ENCODE measurements at regions of chr5 and their contacts with region 1.

Region 1: DNA sequence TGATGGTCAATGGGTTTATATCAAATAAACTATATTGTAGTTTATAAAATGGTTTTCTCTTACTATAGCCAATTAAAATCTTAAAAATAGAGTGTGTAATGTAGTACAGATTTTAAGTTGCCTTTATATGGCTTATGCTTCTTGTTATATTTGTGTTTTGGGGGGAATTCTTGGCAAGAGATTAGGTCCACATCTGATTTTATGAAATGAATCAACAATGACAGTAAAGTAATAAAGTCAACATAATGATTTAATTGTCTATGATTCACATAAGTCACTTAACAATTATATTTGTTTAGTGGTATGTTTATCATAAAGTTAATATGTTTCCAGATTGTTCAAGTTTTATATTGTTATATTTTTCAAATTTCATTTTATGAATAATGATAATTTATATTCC is 164.8 kb downstream of the COMMD10 start:
- DNase-seq: no peak
- ATAC-seq: no peak
- H3K4me3 Mint-ChIP-seq: no peak overlapping the region
- H3K27ac Mint-ChIP-seq: no peak overlapping the region
- H3K4me1 Mint-ChIP-seq: no peaks in the 10 kb centered on the region
- H3K27me3 Mint-ChIP-seq: no peaks in the 10 kb centered on the region

Region 2: GRCh38 chr5:116068028-116068632 is 181.5 kb before region 1 on chr5:
- CTCF ChIA-PET with region 1: no interaction called
- POLR2A ChIA-PET with region 1: no interaction called
- intact Hi-C with region 1: no loop called
- DNase-seq: no peak
- ATAC-seq: peak; percentile 44
- H3K4me3 Mint-ChIP-seq: no peak overlapping the region
- H3K27ac Mint-ChIP-seq: no peak overlapping the region
- H3K4me1 Mint-ChIP-seq: no peaks in the 10 kb centered on the region
- H3K27me3 Mint-ChIP-seq: peaks cover 25% of the 10 kb centered on the region

Region 3: GRCh38 chr5:116289276-116289675 is 39.6 kb after region 1 on chr5:
- CTCF ChIA-PET with region 1: no interaction called
- POLR2A ChIA-PET with region 1: no interaction called
- intact Hi-C with region 1: loop called (anchors 1 to 5 kb)
- DNase-seq: no peak
- ATAC-seq: no peak
- H3K4me3 Mint-ChIP-seq: no peak overlapping the region
- H3K27ac Mint-ChIP-seq: no peak overlapping the region
- H3K4me1 Mint-ChIP-seq: no peaks in the 10 kb centered on the region
- H3K27me3 Mint-ChIP-seq: no peaks in the 10 kb centered on the region